ENCODE measurements at regions of chr17 and their contacts with region 1.

Region 1: GRCh38 chr17:65231662-65232335 is 94.6 kb downstream of the RGS9 start:
- DNase-seq: no peak
- H3K4me3 ChIP-seq: no peak overlapping the region
- H3K27ac ChIP-seq: no peak overlapping the region
- H3K4me1 ChIP-seq: peaks cover 0 to 7% (median 4%) of the 10 kb centered on the region in 4 donors
- H3K27me3 ChIP-seq: peaks cover 0 to 10% (median 0%) of the 10 kb centered on the region in 4 donors
- CTCF ChIP-seq: peak; percentile 61 to 76 (median 75)
- EP300 ChIP-seq: no peak
- POLR2A ChIP-seq: no peak

Region 2: DNA sequence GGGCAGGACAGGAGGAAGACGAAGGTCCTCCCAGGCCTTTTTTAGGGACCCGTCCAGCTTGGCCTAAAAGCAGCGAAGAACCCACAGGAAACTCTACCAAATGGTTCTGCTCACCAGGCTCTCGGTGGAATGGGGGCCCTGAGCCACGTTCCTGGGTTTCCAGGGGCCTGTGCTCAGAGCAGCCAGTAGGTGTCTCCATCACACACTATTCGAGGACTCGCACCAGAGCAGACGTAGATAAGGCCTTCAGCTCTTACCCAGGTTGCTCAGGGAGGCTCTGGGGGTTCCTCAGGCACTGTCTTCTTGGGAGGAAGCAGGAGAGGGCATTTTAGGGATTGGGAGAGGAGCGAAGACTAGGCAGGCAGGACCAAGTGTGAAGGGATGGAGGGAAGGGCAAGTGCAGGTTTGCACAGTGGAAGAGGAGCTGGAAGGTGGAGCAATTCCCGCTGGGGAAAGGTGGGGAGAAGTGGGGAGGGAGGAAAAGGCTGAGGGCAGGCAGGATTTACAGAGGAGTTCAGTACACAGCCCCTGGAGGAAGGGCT is 62.5 kb after region 1 on chr17:
- intact Hi-C with region 1: loop called (anchors 5 kb)
- DNase-seq: no peak
- H3K4me3 ChIP-seq: no peak overlapping the region
- H3K27ac ChIP-seq: no peak overlapping the region
- H3K4me1 ChIP-seq: peaks cover 0 to 9% (median 8%) of the 10 kb centered on the region in 4 donors
- H3K27me3 ChIP-seq: no peaks in the 10 kb centered on the region
- CTCF ChIP-seq: peak; percentile 75 to 84 (median 78)
- EP300 ChIP-seq: no peak
- POLR2A ChIP-seq: no peak

Region 3: DNA sequence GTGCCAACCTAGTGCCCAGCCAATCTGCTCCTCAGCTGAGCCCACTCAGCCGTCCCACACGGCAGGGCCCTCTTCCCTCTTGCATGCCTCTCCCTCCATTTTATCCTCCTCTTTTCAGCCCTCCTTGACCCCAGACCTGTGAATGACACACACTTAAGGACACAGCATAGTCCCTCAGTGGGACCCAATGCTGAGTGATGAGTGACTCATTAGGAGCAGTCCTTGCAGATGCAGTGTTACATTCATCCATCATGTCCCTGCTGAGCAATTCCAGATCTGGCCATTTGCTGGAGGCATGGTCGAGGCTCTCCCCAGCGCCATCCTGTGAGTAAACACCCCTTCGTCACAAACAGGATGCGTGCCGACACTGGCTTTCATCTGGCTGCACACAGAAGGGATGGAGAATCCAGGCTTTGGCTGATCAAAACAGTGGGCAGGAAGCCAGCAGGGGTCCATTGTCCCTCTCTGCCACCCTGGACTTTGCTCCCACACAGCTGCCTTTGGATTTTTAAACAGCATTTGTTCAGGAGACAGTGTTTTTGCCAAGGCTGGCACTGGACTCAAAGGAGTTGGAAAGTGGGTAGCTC is 207.0 kb after region 1 on chr17:
- intact Hi-C with region 1: loop called (anchors 10 kb)
- DNase-seq: no peak
- H3K4me3 ChIP-seq: no peak overlapping the region
- H3K27ac ChIP-seq: no peak overlapping the region
- H3K4me1 ChIP-seq: no peaks in the 10 kb centered on the region
- H3K27me3 ChIP-seq: peaks cover 0 to 12% (median 0%) of the 10 kb centered on the region in 4 donors
- CTCF ChIP-seq: no peak
- EP300 ChIP-seq: no peak
- POLR2A ChIP-seq: no peak

Region 4: DNA sequence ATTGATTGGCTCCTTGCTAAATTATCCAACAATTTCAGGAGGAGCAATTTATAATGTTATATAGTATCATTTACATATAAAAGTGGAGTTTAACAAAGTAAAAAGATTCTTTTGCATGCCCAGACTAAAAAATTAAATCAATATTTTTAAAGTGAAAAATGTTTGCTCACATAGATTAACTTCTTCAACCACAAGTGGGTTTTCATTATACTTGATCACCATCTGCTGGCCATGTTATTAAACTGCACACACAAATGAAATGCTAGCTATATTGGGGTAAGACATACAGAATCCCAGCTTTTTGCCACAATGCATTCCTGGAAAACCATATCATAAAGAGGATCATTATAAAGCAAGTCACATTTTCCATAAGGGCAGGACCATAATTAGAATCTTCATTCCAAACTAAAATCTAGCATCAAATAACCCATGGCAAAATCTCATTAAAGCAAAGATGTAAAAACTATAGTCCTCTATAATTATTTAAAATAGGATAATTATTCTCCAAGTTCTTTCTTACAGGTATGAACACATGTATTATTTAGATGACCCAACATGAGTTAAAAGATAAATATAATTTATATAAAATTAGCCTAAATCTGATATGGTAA is 933.8 kb after region 1 on chr17:
- intact Hi-C with region 1: loop called (anchors 5 kb)
- DNase-seq: no peak
- H3K4me3 ChIP-seq: no peak overlapping the region
- H3K27ac ChIP-seq: no peak overlapping the region
- H3K4me1 ChIP-seq: peaks cover 0 to 29% (median 25%) of the 10 kb centered on the region in 4 donors
- H3K27me3 ChIP-seq: no peaks in the 10 kb centered on the region
- CTCF ChIP-seq: peak; percentile 75 to 81 (median 76)
- EP300 ChIP-seq: no peak
- POLR2A ChIP-seq: no peak

Measured in esophagus muscularis mucosa (tissue), 4 donors.